ENCODE measurements at regions of chr11 and their contacts with region 1.

Region 1: GRCh38 chr11:57345555-57346211 is 7.5 kb downstream of the P2RX3 start:
- DNase-seq: no peak
- ATAC-seq: peak; percentile 89
- H3K4me3 ChIP-seq: no peak overlapping the region
- H3K27ac ChIP-seq: no peak overlapping the region
- H3K4me1 ChIP-seq: no peaks in the 10 kb centered on the region
- H3K27me3 ChIP-seq: no peaks in the 10 kb centered on the region
- CTCF ChIP-seq: peak; percentile 85

Region 2: DNA sequence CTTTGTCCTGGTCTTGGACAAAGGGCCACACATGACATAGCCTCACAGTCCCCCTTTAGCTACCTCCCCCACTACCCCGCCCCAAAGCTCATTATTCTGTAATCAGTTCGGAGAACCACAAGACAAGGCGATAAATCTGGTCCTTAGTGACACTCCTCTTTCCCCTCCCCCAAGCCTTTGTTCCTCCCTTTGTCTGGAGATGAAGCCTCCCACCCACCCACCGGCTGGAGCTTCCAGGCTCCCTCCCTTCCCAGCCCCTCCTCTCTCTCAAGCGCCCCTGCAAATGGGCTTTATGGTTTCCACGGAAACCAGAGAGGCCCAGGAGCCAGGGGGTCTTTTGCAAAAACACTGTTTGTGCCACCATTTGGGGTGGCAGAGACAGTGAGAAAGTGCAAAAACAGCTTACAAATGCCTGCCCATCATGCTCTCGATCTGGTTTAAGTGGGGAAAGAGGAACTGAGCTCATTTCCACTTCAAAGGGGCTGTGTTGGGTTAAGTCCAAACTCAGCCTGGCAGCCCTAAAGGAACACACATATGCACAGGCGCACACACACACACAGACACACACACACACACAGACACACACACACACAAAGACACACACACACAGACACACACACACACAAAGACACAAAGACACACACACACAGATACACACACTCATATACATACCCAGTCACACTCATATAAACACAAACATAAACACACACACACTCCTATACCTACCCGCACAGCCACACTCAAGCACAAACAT is 132.2 kb before region 1 on chr11:
- CTCF ChIA-PET with region 1: interaction called, 14 read pairs
- POLR2A ChIA-PET with region 1: no interaction called
- in situ Hi-C with region 1: no loop called
- intact Hi-C with region 1: no loop called
- DNase-seq: no peak
- ATAC-seq: no peak
- H3K4me3 ChIP-seq: no peak overlapping the region
- H3K27ac ChIP-seq: no peak overlapping the region
- H3K4me1 ChIP-seq: no peaks in the 10 kb centered on the region
- H3K27me3 ChIP-seq: peaks cover 2% of the 10 kb centered on the region; the same call in 1 of the 2 replicates
- CTCF ChIP-seq: no peak

Region 3: GRCh38 chr11:57224537-57224936 is 121.1 kb before region 1 on chr11:
- CTCF ChIA-PET with region 1: no interaction called
- POLR2A ChIA-PET with region 1: no interaction called
- in situ Hi-C with region 1: no loop called
- intact Hi-C with region 1: no loop called
- DNase-seq: no peak
- ATAC-seq: no peak
- H3K4me3 ChIP-seq: no peak overlapping the region
- H3K27ac ChIP-seq: no peak overlapping the region
- H3K4me1 ChIP-seq: no peaks in the 10 kb centered on the region
- H3K27me3 ChIP-seq: peaks cover 2% of the 10 kb centered on the region; the same call in 1 of the 2 replicates
- CTCF ChIP-seq: no peak

Region 4: DNA sequence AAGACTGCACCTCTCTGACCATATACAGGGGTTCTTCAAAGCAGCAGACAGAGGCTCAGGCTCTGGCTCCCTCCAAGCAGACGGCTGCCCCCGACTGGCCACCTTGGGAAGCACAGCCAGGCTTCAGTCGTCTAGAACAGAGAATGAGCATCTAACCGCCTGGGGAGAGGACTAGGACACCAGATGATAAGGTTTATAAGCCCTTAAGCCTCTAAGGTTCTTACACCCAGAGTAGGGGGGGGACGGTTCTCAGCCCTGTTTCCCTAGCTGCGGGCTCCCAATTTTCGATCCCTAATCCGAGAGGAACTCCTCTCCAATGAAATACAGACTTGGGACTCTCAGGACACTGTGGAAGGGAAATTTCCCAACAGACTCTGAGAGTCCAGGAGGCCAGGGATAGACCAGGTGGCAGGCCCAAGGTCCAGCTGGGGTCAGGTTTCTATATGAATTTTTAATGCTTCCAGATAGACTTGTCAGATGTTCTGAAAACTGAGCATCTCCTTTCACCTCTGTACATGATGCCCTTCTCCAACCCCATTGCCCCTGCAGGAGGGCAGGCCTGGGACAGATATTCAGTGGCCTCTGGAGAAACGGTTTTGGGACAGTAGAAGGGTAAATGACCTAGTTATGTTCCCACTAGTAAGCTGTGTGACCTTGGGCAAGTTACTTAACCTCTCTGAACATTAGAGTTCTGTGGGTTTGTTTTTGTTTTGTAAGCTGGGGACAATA is 134.9 kb after region 1 on chr11:
- CTCF ChIA-PET with region 1: interaction called, 4 read pairs
- POLR2A ChIA-PET with region 1: no interaction called
- in situ Hi-C with region 1: no loop called
- intact Hi-C with region 1: loop called (anchors 5 kb)
- DNase-seq: no peak
- ATAC-seq: peak; percentile 74
- H3K4me3 ChIP-seq: no peak overlapping the region
- H3K27ac ChIP-seq: no peak overlapping the region
- H3K4me1 ChIP-seq: no peaks in the 10 kb centered on the region; the same call in 1 of the 2 replicates
- H3K27me3 ChIP-seq: peaks cover 10% of the 10 kb centered on the region
- CTCF ChIP-seq: peak; percentile 91

Region 5: DNA sequence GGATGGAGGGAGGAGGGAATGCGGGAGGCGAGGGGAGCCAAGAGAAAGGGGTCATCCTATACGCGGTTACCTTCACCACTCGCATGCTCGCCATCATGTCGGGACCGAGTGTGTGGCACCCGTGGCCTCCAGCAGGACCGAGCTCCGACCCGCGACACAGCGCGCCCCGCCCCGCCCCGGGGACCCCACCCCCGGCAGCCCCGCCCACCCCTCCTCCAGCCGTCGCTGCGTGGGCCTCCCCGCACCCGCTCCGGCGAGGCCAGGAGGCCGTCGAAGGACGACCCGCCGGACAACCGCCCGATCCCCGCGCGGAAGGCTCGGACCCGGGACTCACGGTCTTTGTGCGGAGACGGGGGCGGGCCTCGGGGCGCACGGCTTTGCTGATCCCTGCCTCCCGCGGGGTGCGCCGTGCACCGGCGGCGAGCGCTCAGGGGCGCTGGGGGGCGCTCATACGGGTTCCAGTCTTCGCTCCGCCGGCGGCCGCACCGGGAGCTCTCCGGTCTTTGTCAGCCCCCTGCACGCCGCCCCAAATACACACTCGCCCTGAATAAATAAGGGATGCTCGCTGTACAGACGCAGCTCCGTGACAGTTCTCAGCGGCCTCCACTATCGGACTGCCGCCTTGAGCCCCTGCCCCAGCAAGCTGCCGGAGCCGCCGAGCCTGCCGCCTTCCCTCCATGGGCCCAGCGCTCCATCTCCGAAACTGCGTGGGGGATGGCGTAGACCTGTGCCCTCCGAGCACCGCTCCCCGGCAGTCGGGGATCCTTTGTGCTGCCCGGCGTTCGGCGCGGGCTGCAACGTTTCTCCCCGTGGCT is 222.0 kb after region 1 on chr11 and contains the start of gene UBE2L6:
- CTCF ChIA-PET with region 1: interaction called, 3 read pairs
- POLR2A ChIA-PET with region 1: no interaction called
- in situ Hi-C with region 1: no loop called
- intact Hi-C with region 1: loop called (anchors 10 kb)
- DNase-seq: no peak
- ATAC-seq: peak; percentile 90
- H3K4me3 ChIP-seq: peak within 1 kb of the TSS; percentile 68 to 82
- H3K27ac ChIP-seq: peak within 1 kb of the TSS; percentile 77
- H3K4me1 ChIP-seq: peaks cover 12% of the 10 kb centered on the region
- H3K27me3 ChIP-seq: no peaks in the 10 kb centered on the region
- CTCF ChIP-seq: no peak; the same call in 1 of the 2 replicates
- total RNA-seq, gene UBE2L6: 19.1 TPM

Region 6: DNA sequence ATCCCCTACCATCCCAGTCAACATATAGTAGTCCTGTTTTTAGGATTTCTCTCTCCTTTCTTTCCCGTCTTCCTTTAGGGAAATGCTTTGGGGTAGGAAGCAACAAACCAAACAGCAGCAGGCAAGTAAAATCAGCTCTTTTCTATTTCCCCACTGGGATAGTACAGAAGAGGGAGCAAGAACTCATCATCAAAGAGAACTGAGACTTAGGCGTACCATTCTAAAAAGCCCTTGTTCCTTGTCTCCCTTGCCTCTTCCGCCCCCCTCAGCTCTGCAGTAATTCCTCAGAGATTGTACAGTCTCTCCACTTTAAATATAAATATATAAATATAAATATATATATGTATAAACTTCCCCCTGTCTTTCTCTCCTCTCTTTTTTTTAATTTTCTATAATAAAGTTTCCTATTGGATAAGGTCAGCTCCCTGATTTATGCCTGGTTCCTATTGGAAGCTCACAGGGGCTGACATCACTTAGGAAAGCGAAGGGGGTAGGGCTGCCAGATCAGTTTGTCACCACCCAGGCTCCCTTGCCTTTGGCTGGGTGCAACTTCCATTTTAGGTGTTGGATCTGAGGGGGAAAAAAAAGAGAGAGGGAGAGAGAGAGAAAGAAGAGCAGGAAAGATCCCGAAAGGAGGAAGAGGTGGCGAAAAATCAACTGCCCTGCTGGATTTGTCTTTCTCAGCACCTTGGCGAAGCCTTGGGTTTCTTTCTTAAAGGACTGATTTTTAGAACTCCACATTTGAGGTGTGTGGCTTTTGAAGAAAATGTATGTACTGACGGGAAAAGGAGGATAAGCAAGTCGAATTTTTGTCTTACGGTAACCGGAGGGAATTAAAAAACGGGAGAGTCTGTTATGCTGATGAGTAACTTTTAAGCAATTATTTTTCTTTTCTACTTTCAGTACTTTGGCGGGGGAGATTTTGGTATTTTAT is 415.9 kb after region 1 on chr11 and contains the start of gene CTNND1:
- CTCF ChIA-PET with region 1: interaction called, 10 read pairs
- POLR2A ChIA-PET with region 1: no interaction called
- in situ Hi-C with region 1: no loop called
- intact Hi-C with region 1: no loop called
- DNase-seq: peak; percentile 86
- ATAC-seq: peak; percentile 99
- H3K4me3 ChIP-seq: peak within 1 kb of the TSS; percentile 90 to 99
- H3K27ac ChIP-seq: peak within 1 kb of the TSS; percentile 99
- H3K4me1 ChIP-seq: peaks cover 20% of the 10 kb centered on the region
- H3K27me3 ChIP-seq: no peaks in the 10 kb centered on the region
- CTCF ChIP-seq: no peak
- total RNA-seq, gene CTNND1: 189 TPM